MCF 10A (cell line): ENCODE measurements at regions of chr15 and their contacts with region 1.

Region 1: GRCh38 chr15:25345943-25346342 is 92.9 kb downstream of the UBE3A start:
- DNase-seq: peak; percentile 57
- H3K4me3 Mint-ChIP-seq: peak overlapping the region; percentile 1
- H3K27ac Mint-ChIP-seq: peak overlapping the region; percentile 69
- H3K4me1 Mint-ChIP-seq: peaks cover 17% of the 10 kb centered on the region
- H3K27me3 Mint-ChIP-seq: no peaks in the 10 kb centered on the region
- CTCF ChIP-seq: no peak

Region 2: DNA sequence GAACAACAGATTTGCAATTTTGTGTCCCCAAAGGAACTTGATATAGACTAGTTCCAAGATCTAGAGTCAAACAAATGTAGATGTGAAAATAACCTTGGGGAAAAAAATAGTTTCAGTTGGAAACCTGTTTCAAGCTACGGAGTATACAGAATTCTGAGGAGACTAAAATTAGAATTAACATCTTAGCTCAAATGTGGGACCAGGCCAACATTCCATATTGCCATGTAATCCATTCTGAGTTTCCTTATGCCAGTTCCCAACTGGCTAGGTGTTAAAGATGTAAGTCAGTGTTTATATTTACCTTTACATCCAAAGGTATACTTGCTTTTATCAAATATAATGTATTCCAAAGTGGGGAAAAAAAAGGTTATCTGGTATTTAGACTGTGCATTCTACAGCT is 16.6 kb after region 1 on chr15:
- CTCF ChIA-PET with region 1: no interaction called
- POLR2A ChIA-PET with region 1: interaction called, 12 read pairs
- intact Hi-C with region 1: no loop called
- DNase-seq: no peak
- H3K4me3 Mint-ChIP-seq: no peak overlapping the region
- H3K27ac Mint-ChIP-seq: no peak overlapping the region
- H3K4me1 Mint-ChIP-seq: no peaks in the 10 kb centered on the region
- H3K27me3 Mint-ChIP-seq: no peaks in the 10 kb centered on the region
- CTCF ChIP-seq: no peak

Region 3: DNA sequence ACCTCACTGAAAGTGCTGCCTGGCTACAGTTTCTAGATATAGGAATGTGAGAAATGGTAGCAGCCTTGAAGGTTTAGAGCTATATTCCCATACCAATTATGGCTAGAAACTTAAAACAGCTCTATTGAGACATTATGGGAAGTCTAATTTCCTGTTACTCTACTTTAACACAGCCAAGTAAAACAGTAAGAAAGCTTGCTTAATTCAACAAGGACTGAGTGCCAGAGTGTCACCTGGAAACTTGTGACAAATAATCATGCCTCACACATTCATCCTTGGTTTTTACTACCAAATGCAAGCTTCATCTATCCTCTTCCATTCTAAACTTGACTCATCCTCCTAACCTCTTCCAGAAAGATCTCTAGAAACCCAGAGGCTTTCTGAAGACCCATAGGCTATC is 51.2 kb after region 1 on chr15:
- CTCF ChIA-PET with region 1: no interaction called
- POLR2A ChIA-PET with region 1: no interaction called
- intact Hi-C with region 1: no loop called
- DNase-seq: peak; percentile 26
- H3K4me3 Mint-ChIP-seq: no peak overlapping the region
- H3K27ac Mint-ChIP-seq: peak overlapping the region; percentile 6
- H3K4me1 Mint-ChIP-seq: peaks cover 26% of the 10 kb centered on the region
- H3K27me3 Mint-ChIP-seq: no peaks in the 10 kb centered on the region
- CTCF ChIP-seq: no peak

Region 4: GRCh38 chr15:25438601-25439368 is 92.8 kb after region 1 on chr15 and contains the start of gene UBE3A:
- CTCF ChIA-PET with region 1: interaction called, 6 read pairs
- POLR2A ChIA-PET with region 1: interaction called, 4 read pairs
- intact Hi-C with region 1: loop called (anchors 5 kb)
- DNase-seq: peak; percentile 89
- H3K4me3 Mint-ChIP-seq: peak within 1 kb of the TSS; percentile 86
- H3K27ac Mint-ChIP-seq: peak within 1 kb of the TSS; percentile 95
- H3K4me1 Mint-ChIP-seq: peaks cover 6% of the 10 kb centered on the region
- H3K27me3 Mint-ChIP-seq: no peaks in the 10 kb centered on the region
- CTCF ChIP-seq: peak; percentile 2
- total RNA-seq, gene UBE3A: 81.2 and 101 TPM in 2 replicates

Region 5: GRCh38 chr15:25465835-25466234 is 119.9 kb after region 1 on chr15:
- CTCF ChIA-PET with region 1: no interaction called
- POLR2A ChIA-PET with region 1: no interaction called
- intact Hi-C with region 1: no loop called
- DNase-seq: peak; percentile 19
- H3K4me3 Mint-ChIP-seq: no peak overlapping the region
- H3K27ac Mint-ChIP-seq: peak overlapping the region; percentile 40
- H3K4me1 Mint-ChIP-seq: peaks cover 22% of the 10 kb centered on the region
- H3K27me3 Mint-ChIP-seq: no peaks in the 10 kb centered on the region
- CTCF ChIP-seq: no peak